ENCODE measurements at regions of chr1 and their contacts with region 1.

Region 1: DNA sequence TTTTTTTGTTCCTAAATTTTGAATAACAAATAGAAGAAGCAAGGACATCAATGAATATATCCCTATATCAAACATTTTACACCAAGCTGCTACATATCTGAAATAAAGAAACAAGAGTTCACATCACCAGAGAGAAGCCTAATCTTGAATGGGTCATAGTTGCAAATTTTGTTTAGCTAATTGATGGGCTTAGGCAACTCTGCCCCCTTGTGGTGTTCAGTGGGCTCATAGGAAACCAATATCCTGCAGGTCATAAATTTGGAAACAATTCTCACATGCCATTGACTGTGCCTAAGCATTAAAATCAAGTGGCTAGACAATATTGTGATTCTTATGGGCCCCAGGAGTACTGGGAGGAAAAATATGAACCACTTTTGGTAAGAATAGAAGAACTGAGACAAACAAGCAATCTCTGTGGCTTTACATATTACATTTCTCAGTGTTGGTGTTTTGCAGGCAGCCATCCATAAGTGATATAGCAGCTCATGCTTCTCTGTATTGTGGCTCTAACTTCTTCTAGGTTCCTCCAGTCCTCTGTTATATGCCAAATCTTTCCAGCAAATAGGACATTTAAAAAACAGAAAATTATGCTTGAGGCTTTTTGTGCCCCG is 1262.8 kb upstream of the PRMT6 start:
- DNase-seq: no peak
- ATAC-seq: no peak
- H3K4me3 ChIP-seq: no peak overlapping the region
- H3K27ac ChIP-seq: no peak overlapping the region
- H3K4me1 ChIP-seq: no peaks in the 10 kb centered on the region
- H3K27me3 ChIP-seq: no peaks in the 10 kb centered on the region
- CTCF ChIP-seq: peak in 6 of 9 donors; percentile 16 to 46 (median 32)

Region 2: GRCh38 chr1:104780470-104781078 is 1013.1 kb before region 1 on chr1:
- intact Hi-C with region 1: loop called in 1 of 10 experiments (anchors 10 kb)
- DNase-seq: no peak
- ATAC-seq: no peak
- H3K4me3 ChIP-seq: no peak overlapping the region
- H3K27ac ChIP-seq: no peak overlapping the region
- H3K4me1 ChIP-seq: no peaks in the 10 kb centered on the region
- H3K27me3 ChIP-seq: no peaks in the 10 kb centered on the region
- CTCF ChIP-seq: peak in 8 of 9 donors; percentile 18 to 70 (median 64)

Region 3: DNA sequence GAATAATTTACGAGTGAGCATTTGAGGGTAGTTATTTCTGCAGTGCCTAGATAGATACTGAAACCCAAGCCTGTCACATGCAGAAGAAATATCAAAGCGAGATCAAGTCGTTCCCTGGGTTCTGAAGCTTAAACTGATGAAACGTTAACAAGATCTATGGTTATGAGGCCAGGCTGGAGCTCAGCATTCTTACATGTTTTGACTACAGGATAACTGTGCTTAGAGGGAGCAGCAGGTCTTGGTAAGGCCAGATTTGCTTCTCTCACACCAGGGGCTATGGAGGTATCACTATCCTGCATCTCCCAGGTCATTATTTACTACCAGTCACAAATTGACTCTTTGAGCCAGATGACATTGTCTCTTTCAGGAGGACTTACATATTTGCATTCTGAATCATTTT is 138.6 kb before region 1 on chr1:
- intact Hi-C with region 1: no loop called
- DNase-seq: no peak
- ATAC-seq: no peak
- H3K4me3 ChIP-seq: no peak overlapping the region
- H3K27ac ChIP-seq: no peak overlapping the region
- H3K4me1 ChIP-seq: no peaks in the 10 kb centered on the region
- H3K27me3 ChIP-seq: no peaks in the 10 kb centered on the region
- CTCF ChIP-seq: no peak

Region 4: DNA sequence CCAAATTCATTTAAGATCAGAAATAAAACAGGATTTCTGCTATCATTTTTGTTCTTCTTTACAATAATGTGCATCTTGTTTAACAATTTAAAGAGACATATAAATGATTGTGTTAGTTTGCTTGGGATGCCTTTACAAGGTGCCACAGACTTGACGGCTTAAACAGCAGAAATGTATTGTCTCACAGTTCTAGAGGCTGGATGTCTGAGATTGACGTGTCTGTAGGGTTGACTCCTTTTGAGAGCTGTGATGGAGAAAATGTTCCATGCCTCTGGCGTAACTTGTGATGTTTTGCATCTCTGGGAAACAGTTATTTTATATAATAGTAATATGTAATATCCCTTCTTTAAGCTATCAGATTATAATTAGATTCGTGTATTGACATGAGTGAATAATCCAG is 171.2 kb after region 1 on chr1:
- intact Hi-C with region 1: no loop called
- DNase-seq: no peak
- ATAC-seq: no peak
- H3K4me3 ChIP-seq: no peak overlapping the region
- H3K27ac ChIP-seq: no peak overlapping the region
- H3K4me1 ChIP-seq: no peaks in the 10 kb centered on the region
- H3K27me3 ChIP-seq: no peaks in the 10 kb centered on the region
- CTCF ChIP-seq: no peak

Measured in heart right ventricle (tissue), 16 donors.